ENCODE measurements at regions of chr1 and their contacts with region 1.

Region 1: DNA sequence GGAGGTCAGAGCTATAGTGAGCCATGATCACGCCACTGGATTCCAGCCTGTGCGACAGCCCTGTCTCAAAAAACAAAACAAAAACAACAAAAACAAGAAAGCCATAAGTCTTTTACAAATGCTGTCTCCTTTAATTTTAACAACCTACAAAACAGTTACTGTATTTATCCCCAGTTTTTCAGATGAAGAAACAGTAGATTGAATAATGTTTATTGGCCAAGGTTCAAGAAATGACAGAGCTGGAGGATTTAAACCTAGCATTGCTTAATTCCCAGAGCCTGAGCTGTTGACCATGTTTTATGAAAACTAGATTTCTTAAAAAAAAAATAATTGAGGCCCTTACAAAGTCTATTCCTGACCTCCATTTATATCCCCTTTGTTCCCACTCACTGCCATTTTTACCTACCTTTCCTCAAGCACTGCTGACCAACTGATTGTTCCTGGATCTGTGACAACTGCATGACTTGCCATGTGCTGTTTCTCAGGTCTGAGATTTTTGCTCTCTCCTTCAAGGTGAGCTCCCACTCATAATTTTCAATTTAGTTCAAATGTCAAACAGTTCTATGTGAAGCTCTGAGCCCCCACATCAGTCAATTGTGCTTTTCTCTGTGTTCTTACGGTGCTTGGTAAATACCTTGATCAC is 140.8 kb downstream of the CHRM3 start:
- DNase-seq: no peak
- ATAC-seq: no peak
- H3K4me3 ChIP-seq: no peak overlapping the region
- H3K27ac ChIP-seq: no peak overlapping the region
- H3K4me1 ChIP-seq: no peaks in the 10 kb centered on the region
- H3K27me3 ChIP-seq: no peaks in the 10 kb centered on the region
- CTCF ChIP-seq: no peak
- POLR2A ChIP-seq: no peak

Region 2: DNA sequence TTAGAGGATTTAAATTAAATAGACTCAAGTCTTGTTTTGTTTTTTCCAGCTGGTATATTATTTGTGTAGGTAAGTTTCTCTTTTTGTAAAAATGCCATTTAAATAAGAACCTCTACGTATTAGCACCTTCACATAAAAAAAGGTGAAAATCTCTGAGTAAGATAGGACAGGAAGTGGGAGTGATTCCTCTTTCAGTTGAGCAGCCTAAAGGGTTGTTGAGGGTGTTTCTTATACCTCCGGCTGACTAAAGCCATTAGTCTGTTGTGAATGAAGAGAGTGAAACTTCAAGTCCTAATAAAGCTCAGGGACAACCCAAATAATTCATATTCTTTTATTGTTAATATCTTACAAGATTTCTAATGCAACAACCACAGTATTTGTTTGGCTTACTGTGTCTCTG is 47.9 kb after region 1 on chr1:
- intact Hi-C with region 1: loop called in 1 of 10 experiments (anchors 10 kb)
- DNase-seq: no peak
- ATAC-seq: no peak
- H3K4me3 ChIP-seq: no peak overlapping the region
- H3K27ac ChIP-seq: no peak overlapping the region
- H3K4me1 ChIP-seq: no peaks in the 10 kb centered on the region
- H3K27me3 ChIP-seq: no peaks in the 10 kb centered on the region
- CTCF ChIP-seq: no peak
- POLR2A ChIP-seq: no peak

Region 3: DNA sequence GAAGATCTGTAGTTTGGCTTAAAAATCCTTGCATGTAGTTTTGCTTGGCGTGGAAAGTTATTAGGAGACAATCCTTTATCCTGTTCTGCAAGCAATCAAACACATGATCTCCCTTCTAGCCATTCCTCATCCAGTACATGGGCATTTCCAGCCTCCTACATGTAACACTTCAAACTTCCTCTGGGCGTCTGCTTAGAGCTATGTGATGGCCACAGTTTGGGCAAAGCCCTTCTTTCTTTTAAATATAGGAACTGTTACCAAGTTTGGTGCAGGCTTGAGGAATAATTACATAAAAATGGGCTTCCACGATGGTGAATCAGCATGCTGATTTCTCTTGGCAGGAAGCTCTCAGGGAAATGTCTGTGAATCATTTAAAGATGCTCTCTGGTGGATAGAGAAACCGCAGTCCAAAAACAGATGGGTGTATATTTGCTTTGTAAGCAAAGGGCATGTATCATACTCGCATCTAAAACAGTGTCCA is 387.6 kb after region 1 on chr1:
- intact Hi-C with region 1: no loop called
- DNase-seq: no peak
- ATAC-seq: no peak
- H3K4me3 ChIP-seq: no peak overlapping the region
- H3K27ac ChIP-seq: peak overlapping the region in 1 of 12 donors; percentile 4
- H3K4me1 ChIP-seq: peaks cover 0 to 3% (median 0%) of the 10 kb centered on the region in 12 donors
- H3K27me3 ChIP-seq: peaks cover 0 to 8% (median 0%) of the 10 kb centered on the region in 9 donors
- CTCF ChIP-seq: no peak
- POLR2A ChIP-seq: no peak

Measured in heart left ventricle (tissue), 16 donors.